CD4-positive, alpha-beta memory T cell (primary cell): ENCODE measurements at regions of chr1 and their contacts with region 1.

Region 1: GRCh38 chr1:206878456-206878855 is 13.0 kb downstream of the IL20 start:
- DNase-seq: no peak
- H3K4me3 ChIP-seq: no peak overlapping the region
- H3K4me3 Mint-ChIP-seq: no peak overlapping the region
- H3K27ac ChIP-seq: no peak overlapping the region
- H3K27ac Mint-ChIP-seq: no peak overlapping the region
- H3K4me1 ChIP-seq: no peaks in the 10 kb centered on the region
- H3K4me1 Mint-ChIP-seq: no peaks in the 10 kb centered on the region
- H3K27me3 ChIP-seq: no peaks in the 10 kb centered on the region
- H3K27me3 Mint-ChIP-seq: peaks cover 3 to 7% of the 10 kb centered on the region in 2 donors

Region 2: DNA sequence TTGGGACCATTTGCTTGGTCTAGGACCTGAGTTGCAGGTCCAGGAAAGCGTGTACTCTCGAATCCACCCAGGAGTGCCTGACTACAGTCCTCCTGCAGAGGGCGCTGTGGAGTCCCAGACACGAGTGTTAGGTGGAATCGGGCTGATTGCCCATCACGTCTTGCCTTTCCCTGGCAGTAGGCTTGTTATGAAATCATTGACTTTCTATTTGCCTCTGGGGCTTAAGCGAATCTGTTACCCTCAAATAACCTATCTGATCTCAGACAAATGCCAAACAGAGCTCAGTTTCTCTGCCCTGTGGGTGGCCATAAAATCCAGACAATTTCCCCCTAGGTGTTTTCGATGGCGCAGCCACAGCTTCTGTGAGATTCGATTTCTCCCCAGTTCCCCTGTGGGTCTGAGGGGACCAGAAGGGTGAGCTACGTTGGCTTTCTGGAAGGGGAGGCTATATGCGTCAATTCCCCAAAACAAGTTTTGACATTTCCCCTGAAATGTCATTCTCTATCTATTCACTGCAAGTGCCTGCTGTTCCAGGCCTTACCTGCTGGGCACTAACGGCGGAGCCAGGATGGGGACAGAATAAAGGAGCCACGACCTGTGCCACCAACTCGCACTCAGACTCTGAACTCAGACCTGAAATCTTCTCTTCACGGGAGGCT is 13.3 kb before region 1 on chr1 and contains the start of gene IL20:
- CTCF ChIA-PET with region 1: interaction called, 11 read pairs
- POLR2A ChIA-PET with region 1: no interaction called
- intact Hi-C with region 1: no loop called
- DNase-seq: peak; percentile 73 to 79 (median 77)
- H3K4me3 ChIP-seq: no peak within 1 kb of the TSS
- H3K4me3 Mint-ChIP-seq: peak within 1 kb of the TSS in 1 of 8 donors; percentile 6
- H3K27ac ChIP-seq: no peak within 1 kb of the TSS
- H3K27ac Mint-ChIP-seq: peak within 1 kb of the TSS in 2 of 7 donors; percentile 15 to 55
- H3K4me1 ChIP-seq: no peaks in the 10 kb centered on the region
- H3K4me1 Mint-ChIP-seq: peaks cover 0 to 5% (median 4%) of the 10 kb centered on the region in 4 donors
- H3K27me3 ChIP-seq: no peaks in the 10 kb centered on the region
- H3K27me3 Mint-ChIP-seq: peaks cover 16% of the 10 kb centered on the region in 2 donors
- total RNA-seq, gene IL20: not detected

Region 3: DNA sequence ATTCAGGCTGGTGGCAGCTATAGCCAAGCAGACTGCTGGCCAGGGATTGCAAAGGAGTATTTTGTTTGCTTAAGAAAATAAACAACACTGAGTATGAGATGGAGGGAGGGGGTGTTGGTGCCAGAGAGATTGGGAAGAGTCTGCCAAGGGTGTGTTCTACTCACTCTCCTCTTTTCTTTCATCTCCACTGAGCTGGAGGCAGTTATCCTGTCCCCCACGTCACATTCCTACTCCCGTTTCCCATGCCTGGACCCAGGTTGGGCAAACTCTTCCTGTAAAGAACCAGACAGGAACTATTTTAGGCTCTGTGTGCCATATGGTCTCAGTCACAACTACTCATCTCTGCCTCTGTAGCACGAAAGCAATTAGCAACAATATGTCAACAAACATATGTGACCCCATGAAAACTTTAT is 17.4 kb after region 1 on chr1:
- CTCF ChIA-PET with region 1: no interaction called
- POLR2A ChIA-PET with region 1: interaction called, 10 read pairs
- intact Hi-C with region 1: no loop called
- DNase-seq: no peak
- H3K4me3 ChIP-seq: no peak overlapping the region
- H3K4me3 Mint-ChIP-seq: no peak overlapping the region
- H3K27ac ChIP-seq: no peak overlapping the region
- H3K27ac Mint-ChIP-seq: peak overlapping the region in 1 of 7 donors; percentile 55
- H3K4me1 ChIP-seq: peaks cover 9% of the 10 kb centered on the region
- H3K4me1 Mint-ChIP-seq: peaks cover 5 to 30% (median 17%) of the 10 kb centered on the region in 4 donors
- H3K27me3 ChIP-seq: no peaks in the 10 kb centered on the region
- H3K27me3 Mint-ChIP-seq: peaks cover 0 to 3% of the 10 kb centered on the region in 2 donors